ENCODE measurements at regions of chr5 and their contacts with region 1.

Region 1: DNA sequence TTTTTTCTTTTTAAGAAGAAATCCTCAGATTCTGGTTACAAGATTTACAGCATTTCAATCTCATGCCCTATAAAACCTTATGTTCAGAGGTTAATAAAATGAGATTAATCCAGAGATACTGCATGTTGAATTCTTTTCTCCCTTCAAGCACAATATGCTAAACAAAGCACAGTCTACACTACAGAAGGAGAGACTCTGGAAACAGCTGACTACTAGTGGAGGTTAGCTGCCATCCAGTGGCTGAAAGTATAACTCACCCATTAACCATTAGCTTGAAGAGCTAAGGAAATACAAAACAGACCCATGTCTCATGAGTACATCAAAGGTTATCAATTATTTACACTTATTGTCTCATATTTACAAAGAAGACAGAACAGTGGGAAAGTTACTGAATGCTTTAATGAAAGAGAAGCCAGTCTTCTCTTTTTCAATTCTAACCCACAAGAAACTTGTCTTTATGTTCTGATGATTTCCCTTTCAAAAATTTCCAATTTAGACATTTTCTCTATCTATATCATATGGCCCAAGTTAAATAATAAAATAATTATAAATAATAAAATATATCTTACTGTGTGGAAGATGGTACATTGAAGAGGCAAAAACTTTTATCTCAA is 12.7 kb upstream of the DNAH5 start:
- DNase-seq: peak in 1 of 2 donors; percentile 9
- ATAC-seq: peak in 1 of 3 donors; percentile 67
- H3K4me3 ChIP-seq: no peak overlapping the region
- H3K4me3 Mint-ChIP-seq: no peak overlapping the region
- H3K27ac ChIP-seq: no peak overlapping the region
- H3K27ac Mint-ChIP-seq: no peak overlapping the region
- H3K4me1 ChIP-seq: no peaks in the 10 kb centered on the region
- H3K4me1 Mint-ChIP-seq: no peaks in the 10 kb centered on the region
- H3K27me3 ChIP-seq: peaks cover 2% of the 10 kb centered on the region
- H3K27me3 Mint-ChIP-seq: peaks cover 0 to 4% of the 10 kb centered on the region in 2 donors
- CTCF ChIP-seq: peak; percentile 17

Region 2: GRCh38 chr5:12292610-12293204 is 1664.4 kb before region 1 on chr5:
- intact Hi-C with region 1: loop called (anchors 5 kb)
- DNase-seq: peak in 1 of 2 donors; percentile 3
- ATAC-seq: no peak
- H3K4me3 ChIP-seq: no peak overlapping the region
- H3K4me3 Mint-ChIP-seq: no peak overlapping the region
- H3K27ac ChIP-seq: no peak overlapping the region
- H3K27ac Mint-ChIP-seq: no peak overlapping the region
- H3K4me1 ChIP-seq: no peaks in the 10 kb centered on the region
- H3K4me1 Mint-ChIP-seq: no peaks in the 10 kb centered on the region
- H3K27me3 ChIP-seq: no peaks in the 10 kb centered on the region
- H3K27me3 Mint-ChIP-seq: no peaks in the 10 kb centered on the region
- CTCF ChIP-seq: no peak

Region 3: GRCh38 chr5:13814302-13814701 is 142.8 kb before region 1 on chr5:
- intact Hi-C with region 1: no loop called
- DNase-seq: no peak
- ATAC-seq: no peak
- H3K4me3 ChIP-seq: no peak overlapping the region
- H3K4me3 Mint-ChIP-seq: no peak overlapping the region
- H3K27ac ChIP-seq: no peak overlapping the region
- H3K27ac Mint-ChIP-seq: no peak overlapping the region
- H3K4me1 ChIP-seq: no peaks in the 10 kb centered on the region
- H3K4me1 Mint-ChIP-seq: no peaks in the 10 kb centered on the region
- H3K27me3 ChIP-seq: no peaks in the 10 kb centered on the region
- H3K27me3 Mint-ChIP-seq: no peaks in the 10 kb centered on the region
- CTCF ChIP-seq: no peak

Region 4: GRCh38 chr5:13921578-13921977 is 35.6 kb before region 1 on chr5:
- intact Hi-C with region 1: no loop called
- DNase-seq: no peak
- ATAC-seq: no peak
- H3K4me3 ChIP-seq: no peak overlapping the region
- H3K4me3 Mint-ChIP-seq: no peak overlapping the region
- H3K27ac ChIP-seq: no peak overlapping the region
- H3K27ac Mint-ChIP-seq: no peak overlapping the region
- H3K4me1 ChIP-seq: no peaks in the 10 kb centered on the region
- H3K4me1 Mint-ChIP-seq: no peaks in the 10 kb centered on the region
- H3K27me3 ChIP-seq: no peaks in the 10 kb centered on the region
- H3K27me3 Mint-ChIP-seq: no peaks in the 10 kb centered on the region
- CTCF ChIP-seq: no peak

Measured in natural killer cell (primary cell).